GM12878 (cell line): ENCODE measurements at regions of chr9 and their contacts with region 1.

Region 1: DNA sequence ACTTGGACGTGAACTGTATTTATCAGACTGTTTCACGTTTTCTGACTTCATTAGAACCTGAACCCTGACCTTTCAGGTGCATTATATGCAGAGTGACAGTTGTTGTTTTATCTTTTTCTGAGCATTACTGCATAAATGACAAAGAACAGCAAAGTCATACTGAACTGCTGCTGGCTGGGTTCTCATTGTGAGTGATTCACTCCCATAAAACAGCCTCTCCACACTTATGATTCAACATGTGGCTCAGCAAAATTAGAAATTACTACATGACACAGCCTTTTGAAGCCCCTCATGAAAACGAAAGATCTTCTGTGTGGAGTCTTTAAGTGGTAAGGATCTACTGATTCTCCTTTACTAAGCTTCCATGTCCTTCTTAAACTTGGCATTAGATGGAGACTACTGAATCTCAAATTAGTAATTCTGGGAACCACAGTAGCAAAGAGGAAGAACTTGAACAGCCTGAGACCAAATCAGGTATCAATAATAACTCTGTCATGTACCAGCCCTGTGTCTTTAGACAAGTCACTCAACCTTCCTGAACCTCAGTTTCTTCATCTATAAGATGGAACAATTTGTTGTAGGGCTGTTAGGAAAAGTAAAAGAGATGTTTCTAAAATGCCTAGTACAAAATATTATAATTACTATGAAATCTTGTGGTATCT is 172.3 kb upstream of the GNA14 start:
- DNase-seq: no peak
- ATAC-seq: peak; percentile 35
- H3K4me3 ChIP-seq: no peak overlapping the region
- H3K27ac ChIP-seq: no peak overlapping the region
- H3K4me1 ChIP-seq: no peaks in the 10 kb centered on the region
- H3K27me3 ChIP-seq: no peaks in the 10 kb centered on the region
- CTCF ChIP-seq: no peak
- EP300 ChIP-seq: no peak
- POLR2A ChIP-seq: no peak
- RAD21 ChIP-seq: no peak

Region 2: DNA sequence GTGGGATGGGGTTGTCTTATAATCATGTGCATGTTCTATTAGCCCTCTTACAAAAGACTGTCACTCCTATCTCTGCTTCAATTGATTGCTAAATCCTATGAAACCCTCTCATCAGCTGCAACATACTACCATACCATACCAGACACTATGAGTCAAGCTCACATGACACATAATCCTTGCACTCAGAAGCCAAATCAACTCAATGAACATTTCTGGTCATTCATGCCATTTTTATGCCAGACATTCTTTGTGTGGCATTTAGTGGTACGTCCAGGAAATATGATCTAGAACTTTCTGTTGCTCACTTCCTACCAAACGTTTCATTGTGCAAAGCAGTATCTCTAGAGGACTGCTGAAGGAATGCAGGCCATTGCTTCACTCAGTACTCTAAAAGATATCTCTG is 13.1 kb before region 1 on chr9:
- CTCF ChIA-PET with region 1: interaction called, 13 read pairs
- POLR2A ChIA-PET with region 1: interaction called, 4 read pairs
- RAD21 ChIA-PET with region 1: interaction called, 3 read pairs
- SMC1A ChIA-PET with region 1: interaction called, 28 read pairs
- in situ Hi-C with region 1: no loop called
- intact Hi-C with region 1: no loop called
- DNase-seq: no peak
- ATAC-seq: peak; percentile 32
- H3K4me3 ChIP-seq: no peak overlapping the region
- H3K27ac ChIP-seq: no peak overlapping the region
- H3K4me1 ChIP-seq: no peaks in the 10 kb centered on the region
- H3K27me3 ChIP-seq: no peaks in the 10 kb centered on the region; a peak in 2 of 4 replicates
- CTCF ChIP-seq: no peak
- EP300 ChIP-seq: no peak
- POLR2A ChIP-seq: no peak
- RAD21 ChIP-seq: no peak

Region 3: GRCh38 chr9:77872863-77873262 is 52.4 kb after region 1 on chr9:
- CTCF ChIA-PET with region 1: no interaction called
- POLR2A ChIA-PET with region 1: no interaction called
- RAD21 ChIA-PET with region 1: no interaction called
- SMC1A ChIA-PET with region 1: no interaction called
- in situ Hi-C with region 1: no loop called
- intact Hi-C with region 1: no loop called
- DNase-seq: no peak
- ATAC-seq: no peak
- H3K4me3 ChIP-seq: no peak overlapping the region
- H3K27ac ChIP-seq: no peak overlapping the region
- H3K4me1 ChIP-seq: no peaks in the 10 kb centered on the region
- H3K27me3 ChIP-seq: no peaks in the 10 kb centered on the region
- CTCF ChIP-seq: no peak
- EP300 ChIP-seq: no peak
- POLR2A ChIP-seq: no peak
- RAD21 ChIP-seq: no peak

Region 4: GRCh38 chr9:78023003-78023741 is 202.7 kb after region 1 on chr9:
- CTCF ChIA-PET with region 1: no interaction called
- POLR2A ChIA-PET with region 1: interaction called, 11 read pairs
- RAD21 ChIA-PET with region 1: no interaction called
- SMC1A ChIA-PET with region 1: no interaction called
- in situ Hi-C with region 1: no loop called
- intact Hi-C with region 1: no loop called
- DNase-seq: no peak
- ATAC-seq: peak; percentile 54
- H3K4me3 ChIP-seq: no peak overlapping the region
- H3K27ac ChIP-seq: no peak overlapping the region
- H3K4me1 ChIP-seq: no peaks in the 10 kb centered on the region
- H3K27me3 ChIP-seq: no peaks in the 10 kb centered on the region; a peak in 2 of 4 replicates
- CTCF ChIP-seq: no peak
- EP300 ChIP-seq: 0 out of 4 replicates have a peak, but pooled peaks of 1 of the 2 experiments have one; percentile 11
- POLR2A ChIP-seq: no peak
- RAD21 ChIP-seq: no peak

Region 5: DNA sequence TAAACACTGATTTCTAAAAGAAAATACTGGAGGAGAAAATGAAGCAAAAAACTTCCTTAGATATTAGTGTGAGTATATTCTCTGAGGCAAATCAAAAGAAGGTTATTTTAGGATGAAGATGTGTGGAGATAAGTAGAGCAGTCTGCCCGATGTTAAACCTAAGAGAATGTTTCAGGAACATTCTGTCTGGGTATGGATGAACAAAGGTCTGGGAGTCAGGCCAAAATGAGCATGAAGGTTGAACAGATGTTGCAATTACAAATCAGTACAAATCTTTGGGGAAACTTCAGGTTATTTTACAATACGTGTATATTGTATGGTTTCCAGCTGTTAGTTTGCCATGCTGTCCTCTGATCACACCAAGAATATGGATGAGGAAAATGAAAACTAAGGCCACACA is 401.0 kb after region 1 on chr9:
- CTCF ChIA-PET with region 1: no interaction called
- POLR2A ChIA-PET with region 1: no interaction called
- RAD21 ChIA-PET with region 1: no interaction called
- SMC1A ChIA-PET with region 1: no interaction called
- in situ Hi-C with region 1: no loop called
- intact Hi-C with region 1: no loop called
- DNase-seq: no peak
- ATAC-seq: no peak
- H3K4me3 ChIP-seq: no peak overlapping the region
- H3K27ac ChIP-seq: no peak overlapping the region
- H3K4me1 ChIP-seq: no peaks in the 10 kb centered on the region
- H3K27me3 ChIP-seq: no peaks in the 10 kb centered on the region
- CTCF ChIP-seq: no peak
- EP300 ChIP-seq: no peak
- POLR2A ChIP-seq: no peak
- RAD21 ChIP-seq: no peak